Right cardiac atrium (tissue), 5 donors: ENCODE measurements at regions of chr7 and their contacts with region 1.

Region 1: DNA sequence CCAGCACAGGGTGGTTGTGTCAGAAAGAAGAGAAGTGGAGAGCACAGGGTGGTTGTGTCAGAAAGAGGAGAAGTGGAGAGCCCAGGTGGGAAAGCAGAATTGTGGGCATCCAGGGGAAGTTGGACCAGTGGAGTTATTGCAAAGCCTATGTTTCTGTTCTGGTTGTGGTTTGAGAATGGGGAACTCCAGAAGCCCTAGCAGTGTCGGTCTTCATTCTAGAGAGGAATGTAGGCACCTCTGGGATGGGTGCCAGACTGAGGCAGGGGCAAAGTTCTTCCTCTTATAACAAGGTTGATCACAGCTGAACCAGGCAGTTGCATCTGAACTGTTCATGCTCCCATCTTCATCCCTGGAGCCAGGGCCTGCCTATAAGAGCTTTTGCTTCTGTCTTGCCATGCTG is 954 bp downstream of the FSCN3 start:
- DNase-seq: peak in 2 of 3 donors; percentile 62 to 67
- ATAC-seq: no peak
- H3K4me3 ChIP-seq: no peak overlapping the region
- H3K27ac ChIP-seq: no peak overlapping the region
- H3K4me1 ChIP-seq: peaks cover 1% of the 10 kb centered on the region
- H3K27me3 ChIP-seq: no peaks in the 10 kb centered on the region

Region 2: GRCh38 chr7:127189886-127190285 is 404.6 kb before region 1 on chr7:
- intact Hi-C with region 1: no loop called
- DNase-seq: no peak
- ATAC-seq: no peak
- H3K4me3 ChIP-seq: no peak overlapping the region
- H3K27ac ChIP-seq: no peak overlapping the region
- H3K4me1 ChIP-seq: no peaks in the 10 kb centered on the region
- H3K27me3 ChIP-seq: no peaks in the 10 kb centered on the region

Region 3: GRCh38 chr7:127648986-127649385 is 54.5 kb after region 1 on chr7:
- intact Hi-C with region 1: loop called in 1 of 4 experiments (anchors 5 kb)
- DNase-seq: no peak
- ATAC-seq: no peak
- H3K4me3 ChIP-seq: no peak overlapping the region
- H3K27ac ChIP-seq: no peak overlapping the region
- H3K4me1 ChIP-seq: peaks cover 3% of the 10 kb centered on the region
- H3K27me3 ChIP-seq: no peaks in the 10 kb centered on the region